PC-9 (cell line): ENCODE measurements at regions of chr3 and their contacts with region 1.

Region 1: GRCh38 chr3:52498137-52499054 is 3.3 kb downstream of the STAB1 start:
- DNase-seq: no peak
- H3K4me3 ChIP-seq: no peak overlapping the region
- H3K27ac ChIP-seq: no peak overlapping the region
- H3K4me1 ChIP-seq: no peaks in the 10 kb centered on the region
- H3K27me3 ChIP-seq: no peaks in the 10 kb centered on the region
- CTCF ChIP-seq: no peak

Region 2: DNA sequence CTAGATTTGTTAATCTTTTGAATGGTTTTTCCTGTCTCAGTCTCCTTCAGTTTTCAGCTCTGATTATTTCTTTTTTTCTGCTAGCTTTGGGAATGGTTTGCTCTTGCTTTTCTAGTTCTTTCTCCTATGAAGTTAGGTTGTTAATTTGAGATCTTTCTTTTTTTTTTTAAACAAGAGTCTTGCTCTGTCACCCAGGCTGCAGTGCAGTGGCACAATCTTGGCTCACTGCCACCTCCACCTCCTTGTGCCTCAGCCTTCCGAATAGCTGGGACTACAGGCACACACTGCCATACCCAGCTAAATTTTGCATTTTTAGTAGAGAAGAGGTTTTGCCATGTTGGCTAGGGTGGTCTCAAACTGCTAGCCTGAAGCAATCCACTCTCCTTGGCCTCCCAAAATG is 94.7 kb after region 1 on chr3:
- CTCF ChIA-PET with region 1: interaction called, 10 read pairs
- POLR2A ChIA-PET with region 1: no interaction called
- intact Hi-C with region 1: no loop called
- DNase-seq: no peak
- H3K4me3 ChIP-seq: no peak overlapping the region
- H3K27ac ChIP-seq: no peak overlapping the region
- H3K4me1 ChIP-seq: no peaks in the 10 kb centered on the region
- H3K27me3 ChIP-seq: no peaks in the 10 kb centered on the region
- CTCF ChIP-seq: no peak